Heart left ventricle (tissue), 16 donors: ENCODE measurements at regions of chr11 and their contacts with region 1.

Region 1: DNA sequence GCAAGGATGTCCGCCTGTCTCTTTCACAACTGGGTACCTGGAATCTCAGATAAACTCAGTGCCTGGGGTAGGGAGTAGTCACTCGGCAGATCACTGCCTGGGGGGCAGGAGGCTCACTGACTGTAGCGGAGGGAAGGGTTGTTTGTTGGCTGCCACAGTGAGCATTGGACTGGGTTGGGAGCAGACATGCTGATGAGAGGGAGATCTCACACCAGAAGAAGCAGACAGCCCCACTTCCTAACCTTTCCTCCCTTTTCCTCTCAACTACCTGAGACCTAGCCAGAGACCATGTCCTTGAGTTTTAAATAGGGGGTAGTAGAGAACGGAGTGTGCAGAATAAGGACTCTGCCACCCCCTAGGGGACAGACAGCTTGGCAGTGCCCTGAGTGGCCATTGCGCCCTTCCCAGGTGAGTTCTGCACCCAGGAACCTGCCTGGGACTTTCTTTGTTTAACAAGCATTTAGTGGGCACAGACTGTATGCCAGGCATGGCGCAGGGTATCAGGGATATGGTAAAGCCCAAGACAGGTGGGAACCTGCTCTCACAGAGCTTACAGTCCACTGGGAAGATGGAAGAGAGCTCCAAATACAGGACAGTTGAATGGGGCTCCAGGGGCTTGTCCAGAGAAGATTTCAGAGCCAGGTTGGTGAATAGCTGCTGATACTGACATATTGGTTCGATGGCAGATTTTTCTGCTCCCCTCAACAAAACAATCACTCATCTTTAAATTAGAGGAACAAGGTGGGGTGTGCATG is 115.7 kb upstream of the NNMT start:
- DNase-seq: peak in 4 of 5 donors; percentile 59 to 71 (median 70)
- ATAC-seq: peak; percentile 29 to 76 (median 60)
- H3K4me3 ChIP-seq: peak overlapping the region in 8 of 12 donors; percentile 8 to 38 (median 28)
- H3K27ac ChIP-seq: peak overlapping the region; percentile 80 to 100 (median 96)
- H3K4me1 ChIP-seq: peaks cover 40 to 96% (median 80%) of the 10 kb centered on the region in 12 donors
- H3K27me3 ChIP-seq: no peaks in the 10 kb centered on the region
- CTCF ChIP-seq: peak; percentile 52 to 82 (median 68)
- POLR2A ChIP-seq: no peak

Region 2: GRCh38 chr11:113176599-113177365 is 1003.7 kb before region 1 on chr11:
- intact Hi-C with region 1: no loop called
- DNase-seq: no peak
- ATAC-seq: no peak
- H3K4me3 ChIP-seq: no peak overlapping the region
- H3K27ac ChIP-seq: no peak overlapping the region
- H3K4me1 ChIP-seq: peaks cover 0 to 39% (median 7%) of the 10 kb centered on the region in 12 donors
- H3K27me3 ChIP-seq: peaks cover 0 to 4% (median 0%) of the 10 kb centered on the region in 9 donors
- CTCF ChIP-seq: no peak
- POLR2A ChIP-seq: no peak

Region 3: DNA sequence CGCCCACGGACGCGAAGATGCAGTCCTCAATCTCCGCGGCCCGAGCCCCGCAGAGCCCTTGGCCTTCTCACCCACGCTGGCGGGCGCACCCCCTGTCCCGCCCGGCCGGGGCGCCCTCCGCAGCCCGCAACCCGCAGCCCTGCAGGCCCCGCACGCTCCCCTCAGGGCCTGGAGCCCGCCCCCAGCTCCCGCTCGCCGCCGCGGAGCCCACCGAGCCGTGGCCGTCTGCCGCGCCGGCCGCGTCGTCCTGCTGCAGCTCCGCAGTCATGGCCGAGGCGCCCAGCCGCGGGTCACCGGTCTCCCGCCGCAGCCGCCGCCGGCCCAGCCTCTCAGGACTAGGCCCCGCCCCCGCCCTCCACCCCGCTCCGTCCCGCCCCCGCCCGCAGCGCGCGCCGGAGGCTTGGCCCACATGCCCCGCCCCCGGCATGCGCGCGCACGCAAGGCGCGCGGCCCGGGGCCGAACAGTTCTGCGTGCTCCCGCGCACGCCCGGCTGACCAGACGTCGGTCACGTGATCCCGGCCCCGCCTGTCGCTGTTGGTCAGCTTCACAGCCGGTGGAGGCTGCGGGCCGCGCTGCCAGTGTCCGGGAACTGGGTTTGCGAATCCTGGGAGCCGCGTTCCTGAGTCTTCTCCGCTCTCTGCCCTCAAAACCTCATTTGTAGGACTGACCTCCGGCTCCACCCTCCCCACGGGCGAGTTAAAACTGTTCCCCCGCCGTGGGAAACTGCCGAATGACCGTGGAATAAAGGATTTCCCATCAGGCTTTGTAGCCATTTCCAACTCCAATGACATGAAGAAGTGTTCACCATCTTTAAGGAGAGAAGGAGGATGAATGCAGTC is 305.0 kb before region 1 on chr11 and contains the start of gene USP28:
- intact Hi-C with region 1: loop called in 1 of 10 experiments (anchors 10 kb)
- DNase-seq: peak; percentile 98 to 99 (median 98)
- ATAC-seq: peak; percentile 64 to 93 (median 82)
- H3K4me3 ChIP-seq: peak within 1 kb of the TSS; percentile 60 to 90 (median 80)
- H3K27ac ChIP-seq: peak within 1 kb of the TSS; percentile 81 to 99 (median 96)
- H3K4me1 ChIP-seq: peaks cover 0 to 43% (median 17%) of the 10 kb centered on the region in 12 donors
- H3K27me3 ChIP-seq: no peaks in the 10 kb centered on the region
- CTCF ChIP-seq: peak in 2 of 12 donors; percentile 19 to 29
- POLR2A ChIP-seq: peak; percentile 81 to 92
- total RNA-seq, gene USP28: 86.7 to 172 (median 124) TPM

Region 4: DNA sequence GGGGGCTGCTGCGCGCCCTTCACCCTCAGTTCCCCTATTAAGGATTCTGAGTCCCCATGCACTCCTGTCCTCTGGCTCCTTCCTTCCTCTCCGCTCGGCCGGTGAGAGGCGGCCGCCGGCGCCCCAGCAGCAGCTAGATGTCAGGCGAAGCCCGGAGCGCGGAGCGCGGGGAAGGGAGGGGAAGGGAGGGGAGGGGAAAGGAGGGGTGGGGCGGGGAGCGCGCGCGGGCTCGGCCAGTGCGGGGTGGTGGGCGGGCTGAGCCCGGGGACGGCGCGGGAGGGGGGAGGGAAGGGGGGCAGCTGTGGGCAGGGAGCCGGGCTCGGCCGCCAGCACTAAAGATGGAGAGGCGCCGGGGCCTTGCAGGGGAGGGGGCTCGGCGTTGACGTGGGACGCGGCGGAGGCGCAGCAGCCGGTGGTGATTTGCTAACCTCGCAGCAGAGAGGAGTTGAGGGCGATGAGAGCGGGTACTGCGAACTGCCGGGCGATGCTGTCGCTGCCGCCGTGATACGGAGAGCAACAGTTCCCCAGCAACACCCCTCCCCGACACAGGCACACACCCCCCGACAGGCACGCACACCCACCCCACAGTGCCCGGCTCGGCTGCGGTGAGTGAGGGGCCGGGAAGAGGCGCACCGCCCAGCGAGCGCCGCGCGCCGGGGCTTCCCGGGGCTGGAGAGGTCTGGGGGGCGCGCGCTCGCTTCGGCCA is 121.0 kb before region 1 on chr11 and contains the start of gene ZBTB16:
- intact Hi-C with region 1: loop called (anchors 1 to 5 kb)
- DNase-seq: peak; percentile 89 to 95 (median 92)
- ATAC-seq: peak; percentile 66 to 82 (median 76)
- H3K4me3 ChIP-seq: peak within 1 kb of the TSS; percentile 60 to 99 (median 80)
- H3K27ac ChIP-seq: peak within 1 kb of the TSS; percentile 79 to 100 (median 98)
- H3K4me1 ChIP-seq: peaks cover 14 to 64% (median 48%) of the 10 kb centered on the region in 12 donors
- H3K27me3 ChIP-seq: peaks cover 0 to 13% (median 0%) of the 10 kb centered on the region in 9 donors
- CTCF ChIP-seq: peak in 11 of 12 donors; percentile 10 to 87 (median 42)
- POLR2A ChIP-seq: peak; percentile 92 to 98
- total RNA-seq, gene ZBTB16: 15.3 to 130 (median 62.8) TPM

Region 5: DNA sequence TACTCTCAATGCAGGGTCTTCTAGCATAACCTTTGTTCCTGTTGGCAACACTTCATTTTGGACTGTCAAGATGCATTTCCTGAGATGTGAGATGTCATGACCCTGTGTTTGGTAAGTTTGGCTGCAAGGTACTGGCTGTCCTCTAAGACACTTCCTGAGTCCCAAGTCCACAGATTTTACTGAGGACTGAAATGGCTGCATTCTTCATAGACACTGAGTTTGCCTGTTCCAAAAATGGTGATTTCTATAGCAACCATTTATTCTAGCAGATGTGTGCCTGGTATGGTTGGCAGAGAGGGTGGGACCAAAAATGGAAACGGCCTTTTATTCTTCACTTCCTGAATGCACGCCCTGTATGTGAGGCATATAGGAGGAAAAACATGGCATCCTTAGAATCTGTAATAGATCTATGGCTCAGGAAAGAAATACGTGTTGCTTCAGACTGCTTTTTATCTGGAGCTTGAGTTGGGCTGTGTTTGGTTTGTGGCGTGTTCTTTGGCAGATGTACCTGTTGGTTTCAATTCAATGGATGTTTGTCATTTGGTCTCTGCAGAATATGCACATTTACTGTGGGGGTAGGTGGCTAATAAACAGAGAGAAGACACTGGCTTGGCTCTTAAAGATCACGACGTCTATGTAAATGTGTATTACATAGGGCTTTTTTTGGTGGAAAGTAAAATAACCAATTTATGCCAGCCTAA is 58.5 kb before region 1 on chr11:
- intact Hi-C with region 1: loop called in 1 of 10 experiments (anchors 10 kb)
- DNase-seq: no peak
- ATAC-seq: no peak
- H3K4me3 ChIP-seq: no peak overlapping the region
- H3K27ac ChIP-seq: peak overlapping the region in 8 of 12 donors; percentile 15 to 72 (median 30)
- H3K4me1 ChIP-seq: peaks cover 18 to 99% (median 74%) of the 10 kb centered on the region in 12 donors
- H3K27me3 ChIP-seq: no peaks in the 10 kb centered on the region
- CTCF ChIP-seq: no peak
- POLR2A ChIP-seq: no peak

Region 6: GRCh38 chr11:114166897-114167323 is 13.6 kb before region 1 on chr11:
- intact Hi-C with region 1: loop called in 5 of 10 experiments (anchors 1 to 2 kb)
- DNase-seq: no peak
- ATAC-seq: peak in 3 of 4 donors; percentile 1 to 3 (median 3)
- H3K4me3 ChIP-seq: peak overlapping the region in 3 of 12 donors; percentile 5 to 31 (median 8)
- H3K27ac ChIP-seq: peak overlapping the region; percentile 80 to 100 (median 98)
- H3K4me1 ChIP-seq: peaks cover 68 to 100% (median 94%) of the 10 kb centered on the region in 12 donors
- H3K27me3 ChIP-seq: no peaks in the 10 kb centered on the region
- CTCF ChIP-seq: no peak
- POLR2A ChIP-seq: peak in 1 of 2 donors; percentile 46

Region 7: DNA sequence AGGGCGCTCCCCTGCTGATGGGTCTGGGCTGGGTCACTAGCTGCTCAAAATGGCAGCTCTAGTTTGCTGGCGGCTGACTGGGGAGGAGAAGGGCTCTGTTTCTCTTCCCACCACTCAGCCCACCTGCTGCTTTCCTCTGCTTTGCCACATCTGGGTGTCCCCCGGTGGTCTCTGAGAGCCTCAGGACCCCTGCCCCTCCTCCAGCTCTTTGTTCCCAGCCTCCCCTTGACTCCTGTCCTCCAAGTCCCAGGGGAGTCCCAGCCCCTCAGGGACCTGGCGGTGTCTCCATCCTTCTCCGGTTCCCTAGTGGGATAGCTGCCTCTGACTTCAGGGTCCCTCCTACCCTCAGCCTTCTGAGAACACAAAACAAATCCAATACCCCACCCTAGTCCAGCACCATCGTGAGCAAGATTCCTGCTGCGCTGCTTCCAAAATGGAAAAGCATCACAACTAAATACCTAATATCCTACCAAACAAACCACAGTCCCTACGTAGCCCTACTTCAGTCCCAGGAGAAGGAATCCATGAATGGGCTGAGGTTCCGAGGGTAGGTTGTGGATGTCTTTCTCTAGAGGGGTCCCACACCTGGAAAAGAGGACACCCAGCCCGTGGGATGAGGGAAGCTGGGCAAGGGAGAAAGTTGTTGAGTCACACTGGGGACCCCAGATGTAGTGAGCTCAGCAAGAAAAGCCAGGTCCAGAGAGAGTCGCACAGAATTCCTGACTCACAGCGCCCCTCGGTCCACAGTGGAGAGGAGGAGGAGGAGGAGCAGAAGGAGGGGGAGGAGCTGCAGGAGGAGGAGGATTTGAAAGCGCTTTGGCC is 70.7 kb after region 1 on chr11:
- intact Hi-C with region 1: loop called in 6 of 10 experiments (anchors 5 kb)
- DNase-seq: peak in 2 of 5 donors; percentile 61 to 69
- ATAC-seq: peak; percentile 12 to 67 (median 55)
- H3K4me3 ChIP-seq: no peak overlapping the region
- H3K27ac ChIP-seq: peak overlapping the region in 9 of 12 donors; percentile 16 to 67 (median 41)
- H3K4me1 ChIP-seq: peaks cover 0 to 56% (median 4%) of the 10 kb centered on the region in 12 donors
- H3K27me3 ChIP-seq: no peaks in the 10 kb centered on the region
- CTCF ChIP-seq: no peak
- POLR2A ChIP-seq: no peak

Region 8: DNA sequence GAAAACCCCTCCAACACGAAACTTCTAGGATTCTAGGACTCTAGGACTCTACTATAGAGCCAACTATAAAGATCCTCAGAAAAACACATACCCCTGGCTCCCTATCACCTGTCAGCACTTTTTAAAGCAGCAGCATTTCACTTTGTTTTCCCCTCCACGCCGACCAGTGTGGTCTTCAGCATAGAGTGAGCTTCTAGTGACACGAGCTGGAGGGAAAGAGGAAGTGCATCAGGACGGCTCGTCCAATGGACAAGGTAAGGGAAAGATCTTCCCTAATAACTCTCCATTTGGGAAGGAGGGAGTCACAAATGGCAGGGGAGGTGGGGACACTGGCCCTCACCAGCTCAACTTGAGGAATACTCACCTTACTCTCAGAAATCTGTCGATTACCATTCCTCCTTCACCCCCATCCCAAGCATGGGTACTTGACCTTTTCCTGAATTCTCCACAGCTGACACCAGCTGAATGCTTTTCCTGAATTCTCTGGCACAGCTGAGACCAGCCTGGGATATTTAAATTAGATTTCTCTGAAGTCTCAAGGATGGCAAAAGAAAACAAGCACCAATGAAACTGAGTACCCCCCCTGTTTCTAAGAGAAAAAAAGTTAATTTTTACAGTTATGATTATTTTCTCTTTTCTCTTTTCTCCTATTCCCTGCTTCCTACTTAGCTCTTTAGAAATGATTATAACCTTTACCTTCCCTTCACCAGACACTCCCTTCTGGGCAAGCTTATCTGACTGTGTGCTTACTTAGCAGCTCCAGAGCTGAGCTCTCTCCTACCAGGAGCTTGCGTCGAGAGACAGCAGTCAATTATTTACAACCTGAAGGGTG is 82.4 kb after region 1 on chr11:
- intact Hi-C with region 1: loop called in 7 of 10 experiments (anchors 5 kb)
- DNase-seq: peak in 2 of 5 donors; percentile 33 to 41
- ATAC-seq: peak in 3 of 4 donors; percentile 42 to 51 (median 47)
- H3K4me3 ChIP-seq: no peak overlapping the region
- H3K27ac ChIP-seq: no peak overlapping the region
- H3K4me1 ChIP-seq: peaks cover 0 to 47% (median 32%) of the 10 kb centered on the region in 12 donors
- H3K27me3 ChIP-seq: no peaks in the 10 kb centered on the region
- CTCF ChIP-seq: peak; percentile 42 to 89 (median 73)
- POLR2A ChIP-seq: no peak

Region 9: DNA sequence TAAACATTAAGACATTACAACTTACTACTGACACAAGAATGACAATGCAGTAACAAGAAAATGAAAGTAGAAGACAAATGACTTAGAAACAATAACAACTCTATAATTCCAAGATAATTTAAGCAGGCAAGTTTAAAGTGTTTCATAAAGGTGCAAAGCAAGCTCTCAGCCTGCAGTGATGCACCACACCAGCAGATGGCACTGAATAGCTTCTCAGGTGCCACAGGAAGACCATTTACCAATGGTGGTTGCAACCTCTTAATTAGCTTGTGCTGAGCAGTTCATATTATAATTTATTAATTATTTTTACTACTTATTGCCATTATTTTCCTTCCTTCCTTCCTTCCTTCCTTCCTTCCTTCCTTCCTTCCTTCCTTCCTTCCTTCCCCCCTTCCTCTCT is 558.5 kb after region 1 on chr11:
- intact Hi-C with region 1: no loop called
- DNase-seq: peak in 1 of 5 donors; percentile 12
- ATAC-seq: no peak
- H3K4me3 ChIP-seq: no peak overlapping the region
- H3K27ac ChIP-seq: no peak overlapping the region
- H3K4me1 ChIP-seq: no peaks in the 10 kb centered on the region
- H3K27me3 ChIP-seq: peaks cover 0 to 9% (median 0%) of the 10 kb centered on the region in 9 donors
- CTCF ChIP-seq: peak; percentile 51 to 76 (median 60)
- POLR2A ChIP-seq: no peak